ENCODE measurements at regions of chr18 and their contacts with region 1.

Region 1: DNA sequence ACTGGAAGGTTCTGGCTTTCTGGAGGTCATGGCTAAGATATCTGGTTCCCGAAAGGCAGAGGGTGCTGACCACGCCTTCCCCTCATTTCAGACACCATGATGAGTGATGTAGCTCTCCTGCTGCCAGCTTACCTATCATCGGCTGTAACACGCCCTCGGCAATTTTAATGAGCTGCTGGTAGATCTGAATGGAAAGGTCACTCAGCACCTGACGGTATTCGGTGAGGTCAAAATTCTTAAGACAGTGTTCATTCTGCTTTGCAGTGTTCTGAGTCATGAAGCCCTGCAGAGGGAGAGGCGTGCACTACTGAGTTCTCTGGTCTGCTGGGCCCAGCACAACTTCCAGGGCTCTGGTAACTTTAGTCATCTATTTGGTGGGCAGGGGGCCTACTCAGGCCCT is 25.7 kb upstream of the ACAA2 start:
- DNase-seq: peak; percentile 83
- H3K4me3 Mint-ChIP-seq: no peak overlapping the region
- H3K27ac Mint-ChIP-seq: peak overlapping the region; percentile 77
- H3K4me1 Mint-ChIP-seq: peaks cover 22% of the 10 kb centered on the region
- H3K27me3 Mint-ChIP-seq: no peaks in the 10 kb centered on the region
- CTCF ChIP-seq: no peak

Region 2: GRCh38 chr18:49645841-49646351 is 193.1 kb before region 1 on chr18:
- CTCF ChIA-PET with region 1: no interaction called
- POLR2A ChIA-PET with region 1: no interaction called
- intact Hi-C with region 1: no loop called
- DNase-seq: no peak
- H3K4me3 Mint-ChIP-seq: no peak overlapping the region
- H3K27ac Mint-ChIP-seq: no peak overlapping the region
- H3K4me1 Mint-ChIP-seq: no peaks in the 10 kb centered on the region
- H3K27me3 Mint-ChIP-seq: no peaks in the 10 kb centered on the region
- CTCF ChIP-seq: no peak

Region 3: DNA sequence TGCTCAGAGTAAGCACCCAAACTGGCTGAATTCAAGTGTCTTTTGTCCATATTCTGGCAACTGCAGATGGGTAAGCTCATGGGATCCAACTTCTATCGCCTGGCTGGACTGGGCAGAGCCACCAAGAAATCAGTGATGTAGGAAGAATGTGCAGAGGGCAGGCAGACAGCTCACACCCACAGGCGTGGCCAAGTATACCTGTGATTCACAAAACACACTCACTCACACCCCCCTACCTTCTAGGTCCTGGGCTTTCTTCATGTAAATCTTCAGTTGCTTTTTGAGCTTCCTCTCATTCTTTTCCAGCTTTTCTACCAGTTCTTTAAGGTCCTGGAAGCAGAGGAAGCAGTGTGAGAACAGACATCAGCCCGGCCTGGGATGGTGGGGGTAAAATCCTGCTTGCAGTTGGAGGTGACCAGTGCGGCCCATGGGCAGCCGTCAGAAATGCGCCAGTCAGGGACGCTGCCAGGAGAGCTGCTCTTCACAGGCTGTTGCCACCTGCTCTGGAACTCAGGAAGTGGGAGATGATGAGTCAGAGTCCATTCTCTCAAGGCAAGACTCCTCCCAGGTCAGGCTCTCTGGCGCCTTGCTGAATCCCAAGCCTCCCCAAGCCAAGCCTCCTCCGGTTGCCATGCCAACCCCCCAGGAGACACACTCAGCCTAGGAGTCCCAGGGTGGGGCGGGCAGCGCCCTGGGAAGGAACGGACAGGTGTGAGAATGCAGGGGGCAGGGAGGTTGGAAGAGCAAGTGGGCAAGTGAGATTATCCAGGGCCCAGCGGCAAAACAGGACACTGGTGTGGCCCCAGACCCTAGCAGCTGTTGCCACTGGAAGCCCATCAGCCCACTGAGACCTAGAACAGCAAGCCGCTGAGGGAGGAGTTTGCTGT is 10.6 kb after region 1 on chr18:
- CTCF ChIA-PET with region 1: interaction called, 3 read pairs
- POLR2A ChIA-PET with region 1: interaction called, 54 read pairs
- intact Hi-C with region 1: no loop called
- DNase-seq: peak; percentile 98
- H3K4me3 Mint-ChIP-seq: peak overlapping the region; percentile 72
- H3K27ac Mint-ChIP-seq: peak overlapping the region; percentile 98
- H3K4me1 Mint-ChIP-seq: peaks cover 42% of the 10 kb centered on the region
- H3K27me3 Mint-ChIP-seq: no peaks in the 10 kb centered on the region
- CTCF ChIP-seq: no peak

Measured in MCF 10A (cell line).